Activated B cell treated with CpG ODN at 0.5 μM for 24 hours (primary cell): ENCODE measurements at regions of chr18 and their contacts with region 1.

Region 1: GRCh38 chr18:45910405-45911023 is 56.6 kb downstream of the EPG5 start:
- DNase-seq: peak; percentile 23
- ATAC-seq: peak; percentile 72
- H3K4me3 Mint-ChIP-seq: no peak overlapping the region
- H3K27ac Mint-ChIP-seq: no peak overlapping the region
- H3K4me1 Mint-ChIP-seq: no peaks in the 10 kb centered on the region
- H3K27me3 Mint-ChIP-seq: no peaks in the 10 kb centered on the region
- CTCF ChIP-seq: peak; percentile 42

Region 2: DNA sequence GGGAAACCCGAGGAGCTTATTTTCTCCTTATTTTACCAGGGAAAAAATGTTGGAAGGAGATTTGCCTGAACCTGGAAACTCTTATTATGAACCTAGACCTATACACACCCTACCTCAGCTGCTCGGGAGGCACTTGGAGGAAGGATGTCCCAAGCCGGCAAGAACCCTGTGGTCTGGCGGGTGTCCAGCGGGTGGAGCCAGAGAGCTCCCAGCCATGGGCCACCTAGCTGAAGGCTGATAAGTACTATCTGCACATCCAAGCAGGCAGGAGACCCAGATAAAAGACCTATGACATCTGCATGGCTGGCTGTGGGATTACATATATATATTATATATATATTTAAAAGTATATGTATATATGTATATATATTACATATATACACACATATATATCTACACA is 187.6 kb before region 1 on chr18:
- CTCF ChIA-PET with region 1: interaction called, 4 read pairs
- POLR2A ChIA-PET with region 1: no interaction called
- intact Hi-C with region 1: loop called (anchors 1 kb)
- DNase-seq: peak; percentile 50
- ATAC-seq: peak; percentile 80
- H3K4me3 Mint-ChIP-seq: no peak overlapping the region
- H3K27ac Mint-ChIP-seq: no peak overlapping the region
- H3K4me1 Mint-ChIP-seq: no peaks in the 10 kb centered on the region
- H3K27me3 Mint-ChIP-seq: peaks cover 8% of the 10 kb centered on the region
- CTCF ChIP-seq: no peak

Region 3: DNA sequence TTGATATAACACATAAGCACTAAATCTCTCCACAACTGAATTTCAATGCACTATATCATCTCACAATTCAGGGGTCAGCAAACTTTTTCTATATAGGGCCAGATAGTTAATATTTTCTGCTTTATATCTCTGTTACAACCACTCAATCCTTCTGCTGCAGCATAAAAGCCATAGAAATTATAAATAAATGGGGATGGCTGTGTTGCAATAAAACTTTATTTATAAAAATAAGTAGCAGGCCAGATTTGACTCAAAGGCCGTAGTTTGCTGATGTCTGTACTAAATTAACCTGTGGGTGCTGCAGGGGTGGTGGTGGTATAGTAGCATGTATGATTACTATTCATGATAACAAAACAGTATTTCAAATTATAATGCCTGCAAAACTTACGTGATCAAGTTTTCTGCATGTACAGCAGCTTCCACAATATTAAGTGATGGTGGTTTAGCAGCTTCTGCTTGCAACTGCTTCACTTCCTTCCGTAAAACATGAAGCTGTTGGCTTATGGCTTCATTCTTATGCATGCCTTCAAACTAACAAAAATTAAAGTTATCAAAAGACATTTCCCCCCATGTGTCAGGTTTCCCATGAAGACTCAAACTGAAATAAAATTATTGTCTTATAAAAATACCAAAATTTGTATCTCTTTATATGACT is 21.0 kb before region 1 on chr18:
- CTCF ChIA-PET with region 1: no interaction called
- POLR2A ChIA-PET with region 1: no interaction called
- intact Hi-C with region 1: no loop called
- DNase-seq: no peak
- ATAC-seq: no peak
- H3K4me3 Mint-ChIP-seq: no peak overlapping the region
- H3K27ac Mint-ChIP-seq: no peak overlapping the region
- H3K4me1 Mint-ChIP-seq: no peaks in the 10 kb centered on the region
- H3K27me3 Mint-ChIP-seq: no peaks in the 10 kb centered on the region
- CTCF ChIP-seq: no peak